HAP-1 (cell line): ENCODE measurements at regions of chr12 and their contacts with region 1.

Region 1: GRCh38 chr12:64256166-64256800 is 34.2 kb upstream of the KICS2 start:
- DNase-seq: peak; percentile 27 to 62
- H3K4me3 ChIP-seq: no peak overlapping the region
- H3K4me1 ChIP-seq: no peaks in the 10 kb centered on the region
- H3K27me3 ChIP-seq: no peaks in the 10 kb centered on the region

Region 2: GRCh38 chr12:62983599-62984022 is 1272.7 kb before region 1 on chr12:
- in situ Hi-C with region 1: loop called (anchors 10 kb)
- DNase-seq: peak; percentile 53 to 64
- H3K4me3 ChIP-seq: no peak overlapping the region
- H3K4me1 ChIP-seq: no peaks in the 10 kb centered on the region
- H3K27me3 ChIP-seq: no peaks in the 10 kb centered on the region

Region 3: DNA sequence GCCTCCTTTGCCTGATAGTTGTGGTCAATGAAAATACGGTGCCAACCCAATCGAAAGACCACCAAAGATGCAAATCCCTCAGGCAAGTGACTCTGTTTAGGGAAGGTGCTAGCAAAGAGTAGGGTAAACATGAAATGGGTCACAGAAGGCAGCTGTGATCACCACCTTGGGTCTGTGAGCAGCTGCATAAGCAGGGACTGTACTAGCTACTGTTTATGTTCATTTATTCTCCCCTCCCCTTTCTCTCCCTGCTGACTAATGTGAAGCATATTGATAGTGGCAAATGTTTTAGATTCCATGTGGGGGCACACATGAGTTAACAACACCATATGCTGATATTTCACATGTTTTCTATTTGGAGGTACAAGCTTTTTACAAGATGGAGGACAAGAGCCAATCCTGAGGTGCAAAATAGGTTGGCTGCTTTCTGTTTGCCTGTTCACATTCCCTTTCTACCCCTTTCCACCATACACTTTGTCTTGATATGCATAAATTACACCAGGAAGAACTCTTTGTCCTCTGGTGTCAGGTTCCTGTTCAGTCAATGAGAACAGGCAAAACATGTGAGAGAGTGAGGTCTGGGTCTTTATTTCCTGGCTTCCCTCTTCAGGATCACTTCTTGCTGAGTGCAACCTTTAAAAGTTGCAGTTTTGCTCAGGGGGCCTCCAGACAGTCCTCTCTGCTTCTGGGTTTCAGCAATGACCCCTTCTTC is 1176.3 kb before region 1 on chr12:
- in situ Hi-C with region 1: loop called (anchors 10 kb)
- DNase-seq: no peak
- H3K4me3 ChIP-seq: no peak overlapping the region
- H3K4me1 ChIP-seq: peaks cover under 1% of the 10 kb centered on the region
- H3K27me3 ChIP-seq: no peaks in the 10 kb centered on the region